Caco-2 (cell line): ENCODE measurements at regions of chr10 and their contacts with region 1.

Region 1: DNA sequence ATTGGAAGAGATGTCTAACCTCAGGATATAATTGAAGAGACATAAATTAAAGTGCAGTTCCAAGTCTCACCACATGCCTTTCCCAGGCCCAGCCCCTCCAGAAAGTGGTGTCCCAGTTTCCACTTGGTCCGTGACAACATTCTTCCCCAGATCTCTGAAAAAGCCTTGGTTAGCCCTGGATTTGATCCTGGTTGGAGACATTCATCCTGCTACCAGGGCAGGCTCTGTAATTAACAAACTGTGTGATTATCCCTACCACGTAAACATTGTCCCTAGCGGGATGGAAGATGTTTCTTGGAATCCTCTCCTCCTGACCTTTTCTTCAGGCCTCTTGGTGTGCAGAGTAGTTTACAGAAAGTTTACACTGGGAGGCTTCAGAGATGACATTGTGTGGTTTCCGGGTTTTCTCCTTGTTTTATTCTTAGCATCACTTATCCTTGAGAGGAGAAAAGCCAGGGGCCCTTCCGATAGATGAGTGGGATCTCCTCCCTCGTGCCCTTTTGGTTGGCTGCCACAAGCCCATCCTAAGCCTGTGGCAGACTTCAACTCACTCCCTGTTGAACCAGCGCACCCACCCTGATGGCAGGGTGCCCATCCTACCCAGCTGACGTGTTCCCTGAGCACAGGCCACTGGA is 83.8 kb downstream of the COL13A1 start:
- DNase-seq: peak in 1 of 2 experiments; percentile 44
- H3K4me3 ChIP-seq: no peak overlapping the region
- H3K4me3 Mint-ChIP-seq: no peak overlapping the region
- H3K27ac Mint-ChIP-seq: no peak overlapping the region
- H3K4me1 ChIP-seq: no peaks in the 10 kb centered on the region
- H3K4me1 Mint-ChIP-seq: peaks cover 20% of the 10 kb centered on the region
- H3K27me3 ChIP-seq: no peaks in the 10 kb centered on the region
- H3K27me3 Mint-ChIP-seq: peaks cover 10% of the 10 kb centered on the region
- CTCF ChIP-seq: peak; percentile 61 to 76

Region 2: DNA sequence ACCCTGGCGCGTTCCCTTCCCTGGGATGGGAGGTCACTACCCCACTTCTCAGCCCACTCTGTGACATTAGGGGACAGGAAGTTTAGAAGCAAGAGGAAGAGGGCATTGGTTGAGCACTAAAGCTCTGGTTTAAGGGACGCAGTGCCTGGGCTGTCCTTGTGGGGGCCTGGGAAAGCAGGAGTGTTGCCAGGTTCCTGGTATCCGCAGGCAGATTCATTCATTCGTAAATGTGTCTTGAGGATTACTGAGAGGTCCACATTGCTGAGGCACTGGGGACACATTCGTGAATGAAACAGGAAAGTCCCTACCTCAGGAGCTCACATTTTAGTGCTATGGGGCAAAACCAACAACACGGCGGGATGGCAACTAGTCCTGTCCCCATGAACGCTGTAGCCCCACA is 14.4 kb before region 1 on chr10:
- CTCF ChIA-PET with region 1: interaction called, 19 read pairs
- POLR2A ChIA-PET with region 1: no interaction called
- intact Hi-C with region 1: no loop called
- DNase-seq: no peak
- H3K4me3 ChIP-seq: no peak overlapping the region
- H3K4me3 Mint-ChIP-seq: no peak overlapping the region
- H3K27ac Mint-ChIP-seq: no peak overlapping the region
- H3K4me1 ChIP-seq: no peaks in the 10 kb centered on the region
- H3K4me1 Mint-ChIP-seq: no peaks in the 10 kb centered on the region
- H3K27me3 ChIP-seq: no peaks in the 10 kb centered on the region; the same call in none of the 2 replicates
- H3K27me3 Mint-ChIP-seq: peaks cover 25% of the 10 kb centered on the region
- CTCF ChIP-seq: peak in 1 of 2 experiments; percentile 19

Region 3: GRCh38 chr10:69901628-69902505 is 16.4 kb after region 1 on chr10:
- CTCF ChIA-PET with region 1: interaction called, 43 read pairs
- POLR2A ChIA-PET with region 1: no interaction called
- intact Hi-C with region 1: no loop called
- DNase-seq: peak; percentile 85 to 88
- H3K4me3 ChIP-seq: no peak overlapping the region
- H3K4me3 Mint-ChIP-seq: no peak overlapping the region
- H3K27ac Mint-ChIP-seq: no peak overlapping the region
- H3K4me1 ChIP-seq: peaks cover 37% of the 10 kb centered on the region
- H3K4me1 Mint-ChIP-seq: peaks cover 29% of the 10 kb centered on the region
- H3K27me3 ChIP-seq: no peaks in the 10 kb centered on the region
- H3K27me3 Mint-ChIP-seq: no peaks in the 10 kb centered on the region
- CTCF ChIP-seq: peak; percentile 91 to 94

Region 4: DNA sequence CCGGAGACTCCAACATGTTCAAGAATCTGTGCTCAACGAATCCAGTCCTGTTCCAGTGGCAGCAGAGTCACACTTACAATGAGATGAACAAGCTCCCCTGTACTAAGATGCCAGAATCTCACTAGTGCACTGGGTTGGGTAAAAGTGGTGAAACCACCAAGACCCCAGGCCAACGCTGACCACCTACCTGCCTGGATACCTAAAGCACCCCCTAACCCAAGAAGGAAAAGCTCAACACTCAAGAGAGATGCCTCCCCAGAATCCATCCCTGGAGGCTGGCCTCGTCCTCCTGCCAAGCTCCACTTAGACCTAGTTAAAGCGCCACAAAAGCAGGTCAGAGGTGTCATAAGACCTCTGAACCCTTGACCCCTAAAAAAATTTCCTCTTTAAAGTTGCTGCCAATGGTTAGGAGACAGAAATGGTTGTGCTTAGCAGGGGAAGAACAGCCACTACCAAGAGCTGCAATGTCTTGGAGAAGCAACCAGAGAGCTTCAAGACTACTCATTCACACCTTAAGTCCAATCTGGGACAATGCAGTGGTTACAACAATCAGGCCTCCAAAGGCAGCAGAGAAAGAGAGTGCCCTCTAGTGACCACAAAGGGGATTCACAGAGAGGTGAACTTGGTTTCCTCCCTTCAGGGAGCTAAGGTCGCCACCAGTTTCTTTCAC is 72.5 kb after region 1 on chr10:
- CTCF ChIA-PET with region 1: interaction called, 61 read pairs
- POLR2A ChIA-PET with region 1: no interaction called
- intact Hi-C with region 1: loop called (anchors 1 kb)
- DNase-seq: peak; percentile 49 to 74
- H3K4me3 ChIP-seq: no peak overlapping the region
- H3K4me3 Mint-ChIP-seq: no peak overlapping the region
- H3K27ac Mint-ChIP-seq: no peak overlapping the region
- H3K4me1 ChIP-seq: no peaks in the 10 kb centered on the region
- H3K4me1 Mint-ChIP-seq: no peaks in the 10 kb centered on the region
- H3K27me3 ChIP-seq: peaks cover 3% of the 10 kb centered on the region
- H3K27me3 Mint-ChIP-seq: peaks cover 32% of the 10 kb centered on the region
- CTCF ChIP-seq: peak; percentile 93 to 97

Region 5: GRCh38 chr10:70096705-70097420 is 211.4 kb after region 1 on chr10:
- CTCF ChIA-PET with region 1: no interaction called
- POLR2A ChIA-PET with region 1: no interaction called
- intact Hi-C with region 1: no loop called
- DNase-seq: no peak
- H3K4me3 ChIP-seq: no peak overlapping the region
- H3K4me3 Mint-ChIP-seq: no peak overlapping the region
- H3K27ac Mint-ChIP-seq: no peak overlapping the region
- H3K4me1 ChIP-seq: peaks cover 26% of the 10 kb centered on the region
- H3K4me1 Mint-ChIP-seq: peaks cover 24% of the 10 kb centered on the region
- H3K27me3 ChIP-seq: no peaks in the 10 kb centered on the region
- H3K27me3 Mint-ChIP-seq: no peaks in the 10 kb centered on the region
- CTCF ChIP-seq: no peak

Region 6: DNA sequence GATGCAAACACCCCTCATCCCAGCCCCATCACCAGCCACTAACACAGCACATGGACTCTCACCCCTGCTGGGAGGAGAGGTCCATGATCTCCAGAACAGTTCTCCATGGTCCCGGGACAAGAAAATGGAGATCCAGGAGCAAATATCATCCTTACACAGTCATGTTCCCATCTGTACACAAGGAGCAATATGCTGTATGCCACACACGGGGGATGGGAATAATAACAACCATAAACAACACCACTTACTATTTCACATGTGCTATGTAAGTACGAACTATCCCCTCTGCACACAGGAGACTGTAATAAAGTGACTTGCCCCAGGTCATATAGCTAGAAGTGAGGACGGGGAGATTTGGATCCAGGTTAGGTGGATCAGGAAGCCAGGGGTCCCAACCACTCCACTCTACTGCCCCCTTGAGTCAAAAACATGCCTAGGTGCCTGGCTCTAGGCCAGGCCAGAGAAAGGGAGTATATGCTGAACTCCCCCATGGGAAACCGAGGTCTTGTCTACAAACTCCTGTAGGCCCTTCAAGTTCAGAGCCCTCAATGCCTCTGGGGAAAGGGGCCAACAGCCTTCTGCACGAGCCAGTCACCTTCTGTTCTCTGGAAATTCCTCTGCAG is 462.8 kb after region 1 on chr10:
- CTCF ChIA-PET with region 1: no interaction called
- POLR2A ChIA-PET with region 1: no interaction called
- intact Hi-C with region 1: no loop called
- DNase-seq: peak in 1 of 2 experiments; percentile 68
- H3K4me3 ChIP-seq: no peak overlapping the region
- H3K4me3 Mint-ChIP-seq: no peak overlapping the region
- H3K27ac Mint-ChIP-seq: no peak overlapping the region
- H3K4me1 ChIP-seq: peaks cover 33% of the 10 kb centered on the region
- H3K4me1 Mint-ChIP-seq: peaks cover 18% of the 10 kb centered on the region
- H3K27me3 ChIP-seq: no peaks in the 10 kb centered on the region
- H3K27me3 Mint-ChIP-seq: no peaks in the 10 kb centered on the region
- CTCF ChIP-seq: peak; percentile 69 to 70